Tibial artery (tissue), 4 donors: ENCODE measurements at regions of chr9 and their contacts with region 1.

Region 1: GRCh38 chr9:8895861-8896224 is 1096.3 kb upstream of the DMAC1 start:
- DNase-seq: no peak
- H3K4me3 ChIP-seq: no peak overlapping the region
- H3K27ac ChIP-seq: no peak overlapping the region
- H3K4me1 ChIP-seq: no peaks in the 10 kb centered on the region
- H3K27me3 ChIP-seq: no peaks in the 10 kb centered on the region
- CTCF ChIP-seq: peak; percentile 64 to 68

Region 2: GRCh38 chr9:7570107-7570720 is 1325.6 kb before region 1 on chr9:
- intact Hi-C with region 1: loop called (anchors 5 kb)
- DNase-seq: peak in 1 of 2 donors; percentile 61
- H3K4me3 ChIP-seq: no peak overlapping the region
- H3K27ac ChIP-seq: no peak overlapping the region
- H3K4me1 ChIP-seq: no peaks in the 10 kb centered on the region
- H3K27me3 ChIP-seq: no peaks in the 10 kb centered on the region
- CTCF ChIP-seq: peak; percentile 61 to 69

Region 3: DNA sequence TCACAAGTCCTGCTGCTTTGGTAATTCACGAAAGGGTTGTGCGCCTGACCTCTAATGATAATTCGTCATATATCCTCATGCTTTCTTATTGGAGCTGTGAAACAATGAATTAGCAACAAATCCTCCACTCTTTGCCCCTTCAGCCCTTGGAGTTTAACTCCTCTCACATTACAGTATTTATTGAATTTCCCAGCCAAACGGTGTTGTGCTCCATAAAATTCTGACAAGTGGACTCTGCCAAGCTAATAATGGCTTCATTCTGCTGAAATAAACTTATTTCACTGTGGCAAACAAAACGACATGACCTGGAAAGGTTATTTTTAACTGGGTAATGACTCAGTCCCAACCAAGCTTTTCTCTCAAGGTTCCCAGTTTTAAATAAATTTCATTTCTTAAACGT is 111.9 kb before region 1 on chr9:
- intact Hi-C with region 1: no loop called
- DNase-seq: no peak
- H3K4me3 ChIP-seq: no peak overlapping the region
- H3K27ac ChIP-seq: peak overlapping the region in 1 of 2 donors; percentile 29
- H3K4me1 ChIP-seq: peaks cover 0 to 21% (median 0%) of the 10 kb centered on the region in 4 donors
- H3K27me3 ChIP-seq: no peaks in the 10 kb centered on the region
- CTCF ChIP-seq: no peak